Naive thymus-derived CD4-positive, alpha-beta T cell (primary cell): ENCODE measurements at regions of chr5 and their contacts with region 1.

Region 1: GRCh38 chr5:178895651-178896571 is at the start of gene ZFP2:
- DNase-seq: peak in 8 of 9 donors; percentile 4 to 26 (median 12)
- ATAC-seq: peak; percentile 75
- H3K4me3 ChIP-seq: peak within 1 kb of the TSS; percentile 47
- H3K4me3 Mint-ChIP-seq: peak within 1 kb of the TSS; percentile 59 to 93 (median 88)
- H3K27ac ChIP-seq: peak within 1 kb of the TSS; percentile 46
- H3K27ac Mint-ChIP-seq: peak within 1 kb of the TSS in 7 of 9 donors; percentile 32 to 67 (median 56)
- H3K4me1 ChIP-seq: no peaks in the 10 kb centered on the region
- H3K4me1 Mint-ChIP-seq: peaks cover 0 to 12% (median 6%) of the 10 kb centered on the region in 7 donors
- H3K27me3 ChIP-seq: no peaks in the 10 kb centered on the region
- H3K27me3 Mint-ChIP-seq: peaks cover 0 to 7% (median 5%) of the 10 kb centered on the region in 5 donors
- total RNA-seq, gene ZFP2: 0.17 to 3.2 (median 1.0) TPM

Region 2: DNA sequence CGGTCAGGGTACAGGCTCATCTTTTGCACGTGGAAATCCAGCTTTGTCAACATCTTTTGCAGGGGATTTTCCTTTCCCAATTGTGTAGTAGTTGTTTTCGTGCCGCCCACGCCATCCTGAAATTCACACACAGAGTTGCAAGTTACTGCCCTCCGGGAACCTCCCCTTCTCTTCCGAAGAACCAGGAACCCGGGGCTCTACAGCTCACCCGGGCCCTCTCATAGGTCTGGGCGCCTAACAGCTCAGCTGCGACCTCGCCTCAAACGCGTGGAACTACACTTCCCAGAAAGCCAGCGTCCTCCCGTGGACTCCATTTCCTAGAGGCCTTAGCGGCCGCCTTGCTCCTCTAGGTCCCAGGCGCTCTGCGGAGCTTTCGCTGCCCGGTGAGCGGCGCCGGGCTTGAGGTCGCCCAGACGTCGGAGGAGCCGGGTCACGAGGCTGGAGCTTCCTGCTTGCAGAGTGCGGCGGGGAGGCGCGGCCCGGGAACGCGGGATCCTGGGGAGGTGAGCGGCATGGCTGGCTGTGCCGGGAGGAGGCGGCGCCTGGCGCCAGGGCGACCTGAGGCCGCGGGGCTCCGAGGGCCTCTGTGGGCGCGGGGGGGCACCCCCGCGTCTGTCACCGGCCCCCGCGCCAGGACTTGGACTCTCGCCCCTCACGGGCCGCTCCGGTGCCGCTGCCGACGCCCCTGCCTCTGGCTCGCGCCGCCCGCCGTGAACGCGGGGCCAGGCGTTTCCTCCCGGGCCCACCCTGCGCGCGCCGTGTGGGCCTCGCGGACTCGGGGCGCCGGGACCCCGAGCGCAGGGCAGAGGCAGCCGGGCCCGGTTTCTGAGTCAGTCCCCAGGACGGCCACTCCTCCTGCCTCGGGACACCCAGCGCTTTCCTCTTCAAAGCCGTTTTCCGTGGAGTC is 36.0 kb before region 1 on chr5 and contains the start of gene ZNF354B:
- CTCF ChIA-PET with region 1: no interaction called
- POLR2A ChIA-PET with region 1: interaction called, 4 read pairs
- intact Hi-C with region 1: loop called in 1 of 2 experiments (anchors 1 kb)
- DNase-seq: peak; percentile 64 to 87 (median 81)
- ATAC-seq: peak; percentile 98
- H3K4me3 ChIP-seq: peak within 1 kb of the TSS; percentile 77
- H3K4me3 Mint-ChIP-seq: peak within 1 kb of the TSS; percentile 85 to 95 (median 93)
- H3K27ac ChIP-seq: peak within 1 kb of the TSS; percentile 75
- H3K27ac Mint-ChIP-seq: peak within 1 kb of the TSS; percentile 71 to 95 (median 90)
- H3K4me1 ChIP-seq: peaks cover 5 to 6% of the 10 kb centered on the region in 2 donors
- H3K4me1 Mint-ChIP-seq: peaks cover 22 to 34% (median 30%) of the 10 kb centered on the region in 7 donors
- H3K27me3 ChIP-seq: no peaks in the 10 kb centered on the region
- H3K27me3 Mint-ChIP-seq: peaks cover 0 to 4% (median 2%) of the 10 kb centered on the region in 5 donors
- total RNA-seq, gene ZNF354B: 12.3 to 36.7 (median 14.4) TPM

Region 3: DNA sequence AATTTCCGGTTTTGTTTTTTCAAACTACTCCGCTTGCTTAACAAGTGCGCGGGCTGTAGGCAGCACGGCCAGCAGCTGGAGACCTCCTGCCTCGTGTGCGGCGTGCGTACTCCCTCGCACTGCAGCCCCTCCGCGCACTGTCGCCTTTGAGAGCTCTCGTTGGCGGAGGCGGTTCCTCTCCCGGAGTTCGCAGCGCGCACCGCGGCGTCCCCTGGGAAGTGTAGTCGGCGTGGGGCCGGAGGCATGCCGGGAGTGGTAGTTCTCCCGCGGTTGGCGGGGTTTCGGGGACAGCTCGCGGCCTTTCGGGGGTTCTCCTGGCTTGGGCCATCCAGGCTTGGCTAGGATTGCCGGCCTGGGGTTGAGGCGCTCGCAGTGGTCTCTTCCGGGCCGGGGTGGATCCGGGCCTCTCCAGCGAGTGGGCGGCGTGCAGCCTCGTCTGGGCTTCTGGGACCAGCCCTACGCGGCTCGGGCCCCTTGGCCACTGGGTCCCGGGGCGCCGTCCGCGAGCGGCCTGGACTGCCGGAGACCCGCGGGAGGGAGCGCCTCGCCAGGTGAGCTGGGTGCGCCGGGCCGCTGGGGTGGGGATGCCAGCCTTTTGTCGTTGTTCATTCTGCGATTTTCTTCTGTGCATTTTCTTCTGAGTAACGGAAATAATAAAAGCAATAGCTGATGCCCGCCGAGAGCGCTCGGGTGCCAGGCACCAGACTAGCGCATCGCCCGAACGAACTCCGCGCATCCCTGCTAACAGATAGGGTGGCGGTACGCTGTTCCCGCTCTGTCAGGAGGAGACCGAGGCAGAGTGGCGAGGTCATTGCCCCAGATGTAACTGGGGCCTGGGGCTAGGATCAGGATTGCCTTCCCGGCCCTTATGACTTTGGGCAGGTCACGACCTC is 164.5 kb after region 1 on chr5 and contains the start of gene ZNF354C:
- CTCF ChIA-PET with region 1: no interaction called
- POLR2A ChIA-PET with region 1: interaction called, 9 read pairs
- intact Hi-C with region 1: loop called in 1 of 2 experiments (anchors 1 kb)
- DNase-seq: peak; percentile 77 to 87 (median 82)
- ATAC-seq: peak; percentile 98
- H3K4me3 ChIP-seq: peak within 1 kb of the TSS; percentile 73
- H3K4me3 Mint-ChIP-seq: peak within 1 kb of the TSS; percentile 89 to 99 (median 94)
- H3K27ac ChIP-seq: peak within 1 kb of the TSS; percentile 79
- H3K27ac Mint-ChIP-seq: peak within 1 kb of the TSS; percentile 82 to 96 (median 92)
- H3K4me1 ChIP-seq: peaks cover 0 to 9% of the 10 kb centered on the region in 2 donors
- H3K4me1 Mint-ChIP-seq: peaks cover 16 to 43% (median 32%) of the 10 kb centered on the region in 7 donors
- H3K27me3 ChIP-seq: no peaks in the 10 kb centered on the region
- H3K27me3 Mint-ChIP-seq: peaks cover 0 to 9% (median 5%) of the 10 kb centered on the region in 5 donors
- total RNA-seq, gene ZNF354C: 3.8 to 12.3 (median 5.2) TPM